Right cardiac atrium (tissue), 5 donors: ENCODE measurements at regions of chr6 and their contacts with region 1.

Region 1: GRCh38 chr6:163543321-163543720 is 128.8 kb downstream of the QKI start:
- DNase-seq: no peak
- ATAC-seq: no peak
- H3K4me3 ChIP-seq: no peak overlapping the region
- H3K27ac ChIP-seq: no peak overlapping the region
- H3K4me1 ChIP-seq: peaks cover 10% of the 10 kb centered on the region
- H3K27me3 ChIP-seq: no peaks in the 10 kb centered on the region

Region 2: DNA sequence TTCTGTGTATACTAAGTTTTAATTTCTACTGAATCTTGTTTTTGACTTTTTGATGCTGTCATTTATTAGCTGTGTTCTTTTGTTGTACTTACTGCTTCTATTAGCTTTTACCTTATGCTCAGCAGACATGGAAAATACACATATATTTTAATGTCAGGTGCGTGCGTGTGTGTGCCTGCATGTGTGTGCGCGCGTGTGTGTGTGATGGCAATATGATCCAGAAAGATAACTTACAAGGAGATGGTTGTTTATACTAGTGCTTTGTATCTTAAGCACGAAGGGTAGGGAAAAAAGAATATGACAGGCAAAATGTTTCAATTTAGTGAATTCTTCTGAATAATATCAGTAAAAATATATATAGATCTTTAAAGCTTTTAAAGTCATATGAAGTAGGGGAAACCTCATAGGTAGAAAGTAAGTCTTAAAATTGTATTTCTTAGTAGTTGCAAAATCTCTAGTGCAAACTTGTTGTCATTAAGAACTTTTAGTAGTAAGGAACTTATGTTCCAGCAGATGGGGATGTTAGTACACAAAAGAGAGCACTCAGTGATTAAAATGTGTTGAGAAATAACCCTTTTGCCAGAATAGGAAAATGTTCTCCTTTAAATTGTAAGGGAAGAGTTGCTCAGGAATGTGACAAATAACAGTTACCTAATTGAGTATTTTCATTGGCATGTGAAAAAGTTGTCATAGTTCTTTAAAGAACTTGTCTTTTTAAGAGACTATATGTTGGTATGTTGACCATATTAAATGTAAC is 115.6 kb before region 1 on chr6:
- intact Hi-C with region 1: loop called in 1 of 4 experiments (anchors 5 kb)
- DNase-seq: peak in 1 of 3 donors; percentile 34
- ATAC-seq: peak; percentile 51 to 63
- H3K4me3 ChIP-seq: no peak overlapping the region
- H3K27ac ChIP-seq: no peak overlapping the region
- H3K4me1 ChIP-seq: peaks cover 12% of the 10 kb centered on the region
- H3K27me3 ChIP-seq: no peaks in the 10 kb centered on the region